Prostate gland (tissue), 2 donors: ENCODE measurements at regions of chr12 and their contacts with region 1.

Region 1: GRCh38 chr12:32312049-32312670 is 87.2 kb upstream of the FGD4 start:
- DNase-seq: peak; percentile 5
- H3K4me3 ChIP-seq: no peak overlapping the region
- H3K27ac ChIP-seq: no peak overlapping the region
- H3K4me1 ChIP-seq: no peaks in the 10 kb centered on the region
- H3K27me3 ChIP-seq: no peaks in the 10 kb centered on the region
- CTCF ChIP-seq: peak in 3 of 4 experiments; percentile 55 to 65 (median 60)
- POLR2A ChIP-seq: no peak

Region 2: GRCh38 chr12:32051559-32052414 is 260.4 kb before region 1 on chr12:
- intact Hi-C with region 1: loop called (anchors 5 kb)
- DNase-seq: no peak
- H3K4me3 ChIP-seq: no peak overlapping the region
- H3K27ac ChIP-seq: no peak overlapping the region
- H3K4me1 ChIP-seq: no peaks in the 10 kb centered on the region
- H3K27me3 ChIP-seq: no peaks in the 10 kb centered on the region
- CTCF ChIP-seq: no peak
- POLR2A ChIP-seq: no peak

Region 3: GRCh38 chr12:32353540-32353939 is 41.4 kb after region 1 on chr12:
- intact Hi-C with region 1: no loop called
- DNase-seq: no peak
- H3K4me3 ChIP-seq: no peak overlapping the region
- H3K27ac ChIP-seq: no peak overlapping the region
- H3K4me1 ChIP-seq: no peaks in the 10 kb centered on the region
- H3K27me3 ChIP-seq: no peaks in the 10 kb centered on the region
- CTCF ChIP-seq: no peak
- POLR2A ChIP-seq: no peak

Region 4: GRCh38 chr12:32467959-32468863 is 156.1 kb after region 1 on chr12:
- intact Hi-C with region 1: no loop called
- DNase-seq: no peak
- H3K4me3 ChIP-seq: no peak overlapping the region
- H3K27ac ChIP-seq: no peak overlapping the region
- H3K4me1 ChIP-seq: no peaks in the 10 kb centered on the region
- H3K27me3 ChIP-seq: no peaks in the 10 kb centered on the region
- CTCF ChIP-seq: no peak
- POLR2A ChIP-seq: no peak